ENCODE measurements at regions of chr14 and their contacts with region 1.

Region 1: GRCh38 chr14:95979339-95980042 is 59.7 kb upstream of the C14orf132 start:
- DNase-seq: no peak
- ATAC-seq: no peak
- H3K4me3 ChIP-seq: no peak overlapping the region
- H3K27ac ChIP-seq: no peak overlapping the region
- H3K4me1 ChIP-seq: no peaks in the 10 kb centered on the region
- H3K27me3 ChIP-seq: peaks cover 0 to 51% (median 40%) of the 10 kb centered on the region in 7 donors
- CTCF ChIP-seq: no peak

Region 2: DNA sequence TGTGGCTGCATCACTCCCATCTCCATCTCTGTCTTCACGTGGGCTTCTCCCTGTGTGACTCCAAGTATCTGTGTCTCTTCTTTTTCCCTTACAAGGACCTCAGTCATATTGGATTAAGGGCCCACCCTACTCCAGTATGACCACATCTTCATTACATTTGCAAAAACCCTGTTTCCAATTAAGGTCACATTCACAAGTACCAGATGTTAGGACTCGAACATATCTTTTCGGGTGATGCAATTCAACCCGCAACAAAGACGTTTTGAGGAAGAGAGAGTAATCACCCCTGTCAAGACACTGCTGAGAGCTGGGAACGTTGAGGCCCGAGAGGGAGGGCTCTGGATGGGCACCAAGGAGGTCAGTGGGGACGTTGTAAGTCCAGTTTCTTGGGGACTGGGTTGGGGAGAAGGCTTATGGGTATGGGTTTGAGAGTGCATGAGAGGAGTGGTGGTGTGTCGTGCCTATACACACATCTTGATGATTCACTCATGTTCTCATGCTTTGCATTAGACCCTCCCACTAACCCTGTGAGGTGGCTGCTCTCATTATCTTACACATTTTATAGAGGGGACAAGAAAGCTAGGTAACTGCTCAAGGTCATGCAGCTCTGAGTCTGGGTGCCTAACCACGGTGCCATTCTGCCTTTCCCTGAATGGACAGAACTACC is 1881.0 kb before region 1 on chr14:
- intact Hi-C with region 1: loop called in 1 of 10 experiments (anchors 10 kb)
- DNase-seq: no peak
- ATAC-seq: no peak
- H3K4me3 ChIP-seq: no peak overlapping the region
- H3K27ac ChIP-seq: no peak overlapping the region
- H3K4me1 ChIP-seq: peaks cover 0 to 7% (median 0%) of the 10 kb centered on the region in 9 donors
- H3K27me3 ChIP-seq: no peaks in the 10 kb centered on the region
- CTCF ChIP-seq: no peak

Region 3: GRCh38 chr14:95901054-95901453 is 78.4 kb before region 1 on chr14:
- intact Hi-C with region 1: loop called in 1 of 10 experiments (anchors 10 kb)
- DNase-seq: no peak
- ATAC-seq: no peak
- H3K4me3 ChIP-seq: no peak overlapping the region
- H3K27ac ChIP-seq: no peak overlapping the region
- H3K4me1 ChIP-seq: no peaks in the 10 kb centered on the region
- H3K27me3 ChIP-seq: peaks cover 0 to 57% (median 32%) of the 10 kb centered on the region in 7 donors
- CTCF ChIP-seq: no peak

Region 4: DNA sequence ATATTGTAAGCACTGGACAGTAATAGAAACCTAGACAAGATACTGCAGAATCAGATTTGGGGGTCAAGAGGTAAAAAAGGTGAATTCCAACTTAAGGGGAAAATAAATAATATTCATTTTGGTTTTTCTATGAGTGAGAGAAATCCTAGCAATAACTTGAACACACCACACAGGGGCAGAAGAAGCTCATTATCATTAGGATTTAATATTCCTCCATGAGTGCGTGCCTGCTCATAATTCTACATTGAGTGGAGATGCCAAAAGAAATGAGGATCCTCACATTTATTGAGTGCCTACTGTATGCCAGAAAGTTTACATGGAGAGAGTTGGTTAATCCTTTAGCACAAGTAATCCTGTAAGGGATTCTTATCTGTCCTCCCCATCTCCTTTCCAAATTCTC is 19.2 kb after region 1 on chr14:
- intact Hi-C with region 1: no loop called
- DNase-seq: no peak
- ATAC-seq: no peak
- H3K4me3 ChIP-seq: no peak overlapping the region
- H3K27ac ChIP-seq: no peak overlapping the region
- H3K4me1 ChIP-seq: no peaks in the 10 kb centered on the region
- H3K27me3 ChIP-seq: peaks cover 0 to 72% (median 54%) of the 10 kb centered on the region in 7 donors
- CTCF ChIP-seq: peak in 7 of 9 donors; percentile 24 to 57 (median 50)

Measured in heart right ventricle (tissue), 16 donors.